ENCODE measurements at regions of chr7 and their contacts with region 1.

Region 1: GRCh38 chr7:132580717-132581285 is 4.5 kb upstream of the PLXNA4 start:
- DNase-seq: peak; percentile 69
- H3K4me3 Mint-ChIP-seq: no peak overlapping the region
- H3K27ac Mint-ChIP-seq: no peak overlapping the region
- H3K4me1 Mint-ChIP-seq: no peaks in the 10 kb centered on the region
- H3K27me3 Mint-ChIP-seq: peaks cover 84% of the 10 kb centered on the region
- CTCF ChIP-seq: peak; percentile 75

Region 2: GRCh38 chr7:131688738-131689661 is 891.8 kb before region 1 on chr7:
- CTCF ChIA-PET with region 1: interaction called, 14 read pairs
- intact Hi-C with region 1: loop called (anchors 1 kb)
- DNase-seq: peak; percentile 75
- H3K4me3 Mint-ChIP-seq: no peak overlapping the region
- H3K27ac Mint-ChIP-seq: no peak overlapping the region
- H3K4me1 Mint-ChIP-seq: peaks cover 10% of the 10 kb centered on the region
- H3K27me3 Mint-ChIP-seq: peaks cover 100% of the 10 kb centered on the region
- CTCF ChIP-seq: peak; percentile 93

Region 3: DNA sequence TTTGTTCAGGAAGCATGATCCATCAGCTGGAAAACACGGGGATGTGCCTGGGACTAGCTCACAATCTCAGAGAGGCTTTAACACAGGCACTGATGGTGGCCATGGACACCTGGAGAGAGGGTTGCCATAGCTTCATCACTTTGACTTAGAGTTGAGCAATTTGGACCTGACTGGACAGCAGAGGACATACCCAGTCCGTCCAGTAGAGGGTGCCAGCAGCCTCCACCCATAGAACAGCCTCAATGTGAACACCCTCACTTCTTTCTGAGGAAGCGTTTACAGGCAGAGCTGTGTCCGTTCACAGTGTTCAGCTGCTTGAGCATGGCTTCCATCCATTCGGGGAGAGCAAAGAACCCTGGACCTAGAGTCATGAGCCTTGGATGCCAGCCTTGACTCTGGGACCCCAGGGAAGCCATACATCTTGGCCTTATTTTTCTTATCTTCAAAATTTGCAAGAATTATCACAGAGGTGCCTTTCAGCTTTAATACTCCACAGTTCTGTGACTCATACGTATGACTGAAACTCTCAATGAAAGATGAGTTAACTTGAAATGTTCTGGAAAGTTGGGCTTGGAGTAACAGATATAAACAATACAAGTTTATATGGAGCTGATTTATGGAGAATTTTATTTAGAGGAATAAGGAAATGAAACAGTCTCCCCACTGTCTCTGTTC is 721.5 kb before region 1 on chr7:
- CTCF ChIA-PET with region 1: interaction called, 12 read pairs
- intact Hi-C with region 1: no loop called
- DNase-seq: peak; percentile 79
- H3K4me3 Mint-ChIP-seq: no peak overlapping the region
- H3K27ac Mint-ChIP-seq: no peak overlapping the region
- H3K4me1 Mint-ChIP-seq: no peaks in the 10 kb centered on the region
- H3K27me3 Mint-ChIP-seq: peaks cover 50% of the 10 kb centered on the region
- CTCF ChIP-seq: peak; percentile 67

Region 4: DNA sequence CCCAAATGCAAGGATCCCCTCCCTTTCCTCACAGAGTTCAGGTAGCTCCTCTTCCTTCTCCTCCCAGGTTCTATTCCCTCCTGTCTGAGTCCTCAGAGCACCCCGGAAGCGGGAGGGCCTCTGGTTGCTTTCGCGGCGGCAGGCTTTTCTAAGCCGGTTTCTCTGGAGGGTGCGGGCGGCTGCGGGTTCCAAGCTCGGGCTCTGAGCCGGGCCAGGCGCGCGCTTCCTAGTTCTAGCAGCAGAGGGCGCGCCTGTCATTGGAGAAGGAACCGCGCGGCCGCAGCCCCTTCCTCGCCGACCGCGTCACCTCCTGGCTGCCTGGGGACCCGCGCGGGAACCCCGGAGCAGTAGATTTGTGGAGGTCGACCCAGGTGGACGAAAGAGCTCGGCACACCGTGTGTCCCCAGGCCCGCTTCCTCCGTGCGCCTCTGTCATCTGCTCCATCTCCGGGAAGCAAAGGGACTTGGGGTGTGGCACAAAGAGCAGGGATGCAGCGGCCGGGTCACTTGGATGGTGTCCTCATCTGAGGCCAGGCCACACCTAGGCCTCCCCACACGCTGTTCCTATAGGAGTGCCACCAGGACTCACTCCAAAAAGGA is 635.4 kb before region 1 on chr7:
- CTCF ChIA-PET with region 1: interaction called, 8 read pairs
- intact Hi-C with region 1: loop called (anchors 1 kb)
- DNase-seq: peak; percentile 66
- H3K4me3 Mint-ChIP-seq: no peak overlapping the region
- H3K27ac Mint-ChIP-seq: no peak overlapping the region
- H3K4me1 Mint-ChIP-seq: peaks cover 7% of the 10 kb centered on the region
- H3K27me3 Mint-ChIP-seq: peaks cover 81% of the 10 kb centered on the region
- CTCF ChIP-seq: peak; percentile 85

Region 5: GRCh38 chr7:132318352-132319318 is 262.2 kb before region 1 on chr7:
- CTCF ChIA-PET with region 1: interaction called, 12 read pairs
- intact Hi-C with region 1: loop called (anchors 1 kb)
- DNase-seq: peak; percentile 82
- H3K4me3 Mint-ChIP-seq: no peak overlapping the region
- H3K27ac Mint-ChIP-seq: no peak overlapping the region
- H3K4me1 Mint-ChIP-seq: peaks cover 12% of the 10 kb centered on the region
- H3K27me3 Mint-ChIP-seq: peaks cover 92% of the 10 kb centered on the region
- CTCF ChIP-seq: peak; percentile 81

Region 6: DNA sequence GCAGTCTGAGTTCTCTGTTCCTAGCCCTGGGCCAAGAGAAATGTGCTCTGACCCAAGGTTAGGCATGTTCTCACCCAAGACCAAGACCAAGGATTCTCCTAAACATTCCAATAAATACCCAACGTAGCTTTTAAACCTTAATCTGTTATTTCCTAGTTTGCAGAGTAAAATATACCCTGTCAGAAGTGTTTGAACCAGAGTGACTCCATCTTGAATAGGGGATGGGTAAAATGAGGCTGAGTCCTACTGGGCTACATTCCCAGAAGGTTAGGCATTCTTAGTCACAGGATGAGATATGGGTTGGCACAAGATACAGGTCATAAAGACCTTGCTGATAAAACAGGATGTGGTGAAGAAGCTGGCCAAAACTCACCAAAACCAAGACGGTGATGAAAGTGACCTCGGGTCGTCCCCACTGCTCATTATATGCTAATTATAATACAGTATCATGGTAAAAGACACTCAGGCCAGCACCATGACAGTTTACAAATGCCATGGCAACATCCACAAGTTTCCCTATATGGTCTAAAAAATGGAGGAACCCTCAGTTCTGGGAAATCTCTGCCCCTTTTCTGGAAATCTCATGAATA is 32.2 kb before region 1 on chr7:
- CTCF ChIA-PET with region 1: no interaction called
- intact Hi-C with region 1: no loop called
- DNase-seq: no peak
- H3K4me3 Mint-ChIP-seq: no peak overlapping the region
- H3K27ac Mint-ChIP-seq: no peak overlapping the region
- H3K4me1 Mint-ChIP-seq: no peaks in the 10 kb centered on the region
- H3K27me3 Mint-ChIP-seq: peaks cover 75% of the 10 kb centered on the region
- CTCF ChIP-seq: no peak

Region 7: GRCh38 chr7:132560825-132561529 is 19.8 kb before region 1 on chr7:
- CTCF ChIA-PET with region 1: no interaction called
- intact Hi-C with region 1: no loop called
- DNase-seq: no peak
- H3K4me3 Mint-ChIP-seq: no peak overlapping the region
- H3K27ac Mint-ChIP-seq: no peak overlapping the region
- H3K4me1 Mint-ChIP-seq: no peaks in the 10 kb centered on the region
- H3K27me3 Mint-ChIP-seq: peaks cover 80% of the 10 kb centered on the region
- CTCF ChIP-seq: no peak

Region 8: DNA sequence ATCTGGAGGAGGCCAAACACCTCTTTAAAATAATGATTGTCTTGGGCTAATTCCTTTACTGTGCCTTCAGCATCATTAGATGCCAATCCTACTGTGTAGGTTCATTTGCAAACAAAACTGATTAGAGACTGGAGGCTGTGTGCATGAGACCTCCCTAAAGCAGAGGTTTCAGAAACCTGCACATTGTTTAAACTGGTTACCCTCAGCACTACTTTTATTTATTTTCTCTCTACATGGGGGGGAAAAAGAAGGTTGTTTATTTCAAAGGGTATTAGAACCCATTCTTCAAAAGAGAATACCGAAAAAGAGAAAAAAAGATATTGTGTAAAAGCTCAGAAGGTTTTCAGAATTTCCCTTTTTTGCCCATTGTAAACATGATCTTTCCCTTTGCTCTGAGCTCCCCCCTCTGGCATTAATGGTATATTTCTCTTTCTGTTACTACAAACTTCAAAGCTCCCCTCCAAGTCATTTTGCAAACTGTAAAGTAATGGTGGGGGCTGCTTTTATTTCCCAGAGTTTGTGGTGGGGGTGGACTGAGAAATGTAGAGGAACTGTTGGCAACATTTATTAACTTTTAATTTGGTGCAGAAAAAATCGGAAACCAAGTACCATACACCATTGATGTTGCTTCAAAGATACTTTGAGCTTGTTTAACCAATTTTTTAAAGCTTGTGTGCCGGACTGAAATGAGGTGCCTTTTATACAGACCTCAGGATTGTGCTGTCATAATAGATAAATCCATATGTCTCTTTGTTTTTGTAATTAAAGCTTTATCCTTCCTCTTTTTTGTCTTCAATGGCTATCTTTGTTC is 853.5 kb after region 1 on chr7:
- CTCF ChIA-PET with region 1: no interaction called
- intact Hi-C with region 1: loop called (anchors 5 kb)
- DNase-seq: no peak
- H3K4me3 Mint-ChIP-seq: no peak overlapping the region
- H3K27ac Mint-ChIP-seq: no peak overlapping the region
- H3K4me1 Mint-ChIP-seq: peaks cover 15% of the 10 kb centered on the region
- H3K27me3 Mint-ChIP-seq: no peaks in the 10 kb centered on the region
- CTCF ChIP-seq: peak; percentile 30